Transverse colon (tissue), 4 donors: ENCODE measurements at regions of chr5 and their contacts with region 1.

Region 1: DNA sequence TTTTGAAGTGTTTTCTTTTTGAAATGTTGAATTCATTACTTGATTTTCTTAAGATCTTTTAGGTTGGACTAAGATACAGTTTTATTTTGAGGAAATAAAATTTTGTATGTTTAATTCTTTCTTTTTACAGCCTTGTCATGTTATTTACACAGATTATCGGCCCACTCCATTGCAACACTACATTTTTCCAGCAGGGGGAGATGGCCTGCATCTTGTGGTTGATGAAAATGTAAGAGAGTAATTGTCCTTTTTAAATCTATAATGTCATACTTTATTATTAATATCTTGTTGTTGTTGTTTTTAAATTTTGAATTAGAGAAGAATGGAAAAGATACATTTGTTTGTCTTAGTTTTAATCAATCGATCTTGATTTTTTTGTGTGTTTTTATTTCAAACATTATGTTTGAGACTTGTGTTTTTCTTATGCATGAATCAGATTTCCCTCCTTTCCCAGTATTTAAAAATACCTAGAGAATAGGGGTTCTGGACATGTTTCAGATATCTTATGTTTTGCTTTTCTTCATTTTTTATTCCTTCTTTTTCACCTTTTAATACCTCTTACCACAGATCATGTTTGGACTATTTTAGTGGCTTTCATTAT is 36.7 kb downstream of the MTREX start:
- DNase-seq: peak; percentile 66
- H3K4me3 ChIP-seq: no peak overlapping the region
- H3K27ac ChIP-seq: no peak overlapping the region
- H3K4me1 ChIP-seq: peaks cover 0 to 5% (median 2%) of the 10 kb centered on the region in 4 donors
- H3K27me3 ChIP-seq: no peaks in the 10 kb centered on the region
- CTCF ChIP-seq: peak; percentile 88 to 93 (median 90)
- EP300 ChIP-seq: no peak
- POLR2A ChIP-seq: no peak

Region 2: GRCh38 chr5:55052383-55052931 is 292.0 kb before region 1 on chr5:
- in situ Hi-C with region 1: no loop called
- intact Hi-C with region 1: no loop called
- DNase-seq: no peak
- H3K4me3 ChIP-seq: no peak overlapping the region
- H3K27ac ChIP-seq: no peak overlapping the region
- H3K4me1 ChIP-seq: no peaks in the 10 kb centered on the region
- H3K27me3 ChIP-seq: no peaks in the 10 kb centered on the region
- CTCF ChIP-seq: no peak
- EP300 ChIP-seq: no peak
- POLR2A ChIP-seq: no peak

Region 3: DNA sequence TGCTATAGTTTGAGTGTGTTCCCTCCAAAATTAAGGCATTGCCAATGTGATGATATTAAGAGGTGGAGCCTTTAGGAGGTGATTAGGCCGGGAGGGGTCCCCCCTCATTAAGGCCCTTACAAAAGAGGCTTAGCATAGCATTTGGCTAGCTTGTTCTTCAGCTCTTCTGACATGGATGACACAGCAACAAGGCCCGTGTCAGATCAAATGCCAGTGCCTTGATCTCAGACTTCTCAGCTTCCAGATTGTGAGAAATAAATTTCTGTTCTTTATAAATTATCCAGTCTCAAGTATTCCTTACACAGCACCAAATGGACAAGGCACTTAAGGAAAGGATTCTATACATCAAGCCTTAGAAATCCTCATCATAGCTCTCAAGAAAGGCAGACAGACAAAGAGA is 335.9 kb after region 1 on chr5:
- in situ Hi-C with region 1: loop called in 2 of 4 experiments (anchors 10 to 25 kb)
- intact Hi-C with region 1: no loop called
- DNase-seq: no peak
- H3K4me3 ChIP-seq: no peak overlapping the region
- H3K27ac ChIP-seq: peak overlapping the region in 1 of 4 donors; percentile 18
- H3K4me1 ChIP-seq: peaks cover 0 to 10% (median 3%) of the 10 kb centered on the region in 4 donors
- H3K27me3 ChIP-seq: no peaks in the 10 kb centered on the region
- CTCF ChIP-seq: no peak
- EP300 ChIP-seq: no peak
- POLR2A ChIP-seq: no peak

Region 4: DNA sequence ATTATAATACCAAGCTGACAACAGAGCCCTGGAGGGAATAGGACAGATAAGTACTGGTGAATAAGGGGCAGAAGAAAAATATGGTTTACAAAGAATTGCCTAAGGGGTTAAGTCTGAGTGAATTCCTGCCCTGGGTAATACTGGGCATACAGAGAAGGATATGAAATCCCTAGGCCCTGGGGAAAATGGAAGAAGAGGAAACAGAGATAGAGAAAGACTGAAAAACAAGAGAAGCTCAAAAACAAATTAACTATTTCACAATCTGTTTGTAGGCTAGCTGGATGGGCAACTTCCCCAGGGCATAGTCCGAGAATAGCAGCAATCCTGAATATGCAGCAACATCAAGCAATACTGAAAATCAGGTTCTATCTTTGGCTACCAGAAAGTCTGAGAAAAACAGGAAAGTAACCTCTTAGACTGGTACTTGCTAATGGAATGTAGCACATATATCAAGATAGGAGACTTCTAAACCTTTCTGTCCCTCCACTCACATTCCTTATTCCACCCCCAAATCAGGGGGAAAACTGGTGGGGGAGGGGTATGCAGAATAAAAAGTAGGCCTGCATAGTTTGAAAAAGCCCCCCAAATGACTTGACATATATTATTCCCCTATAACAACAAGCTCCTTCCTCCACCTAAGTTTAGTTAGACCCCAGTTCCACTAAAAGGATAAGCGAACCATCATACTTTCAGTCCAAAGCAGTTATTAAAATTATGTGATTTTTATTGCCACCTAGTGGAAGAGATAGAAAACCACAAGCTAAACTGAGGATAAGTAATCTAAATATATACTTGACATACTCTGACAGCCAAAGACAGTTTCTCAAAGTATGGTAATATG is 347.0 kb after region 1 on chr5:
- in situ Hi-C with region 1: loop called in 2 of 4 experiments (anchors 10 to 25 kb)
- intact Hi-C with region 1: loop called (anchors 10 kb)
- DNase-seq: no peak
- H3K4me3 ChIP-seq: no peak overlapping the region
- H3K27ac ChIP-seq: peak overlapping the region; percentile 7 to 56 (median 28)
- H3K4me1 ChIP-seq: peaks cover 9 to 34% (median 19%) of the 10 kb centered on the region in 4 donors
- H3K27me3 ChIP-seq: no peaks in the 10 kb centered on the region
- CTCF ChIP-seq: peak; percentile 67 to 85 (median 71)
- EP300 ChIP-seq: no peak
- POLR2A ChIP-seq: no peak